ENCODE measurements at regions of chr6 and their contacts with region 1.

Region 1: DNA sequence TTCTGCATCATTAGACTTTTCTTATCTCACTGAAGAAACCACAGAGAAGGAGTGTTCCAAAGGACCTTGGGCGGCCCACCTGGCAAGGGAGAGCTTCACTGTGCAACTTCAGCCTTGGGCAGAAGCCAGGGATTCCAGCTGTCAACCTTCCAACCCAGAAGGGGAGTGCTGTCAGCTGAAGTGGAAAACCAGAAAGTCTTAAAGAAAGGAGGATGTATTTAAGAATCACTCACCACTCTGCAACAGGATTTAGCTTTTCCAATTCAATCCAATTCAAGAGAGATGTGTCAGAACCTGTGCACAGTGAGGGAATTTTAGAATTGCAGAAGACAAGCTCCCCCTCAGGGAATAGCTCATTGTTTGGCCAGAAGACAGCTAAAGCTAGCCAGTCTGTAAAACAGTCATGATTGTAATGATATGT is 553.7 kb downstream of the CD83 start:
- DNase-seq: no peak
- H3K4me3 ChIP-seq: no peak overlapping the region
- H3K27ac ChIP-seq: no peak overlapping the region
- H3K4me1 ChIP-seq: peaks cover 0 to 4% (median 0%) of the 10 kb centered on the region in 4 experiments
- H3K27me3 ChIP-seq: peaks cover 0 to 4% (median 0%) of the 10 kb centered on the region in 5 experiments

Region 2: GRCh38 chr6:14660806-14661579 is 10.3 kb before region 1 on chr6:
- CTCF ChIA-PET with region 1: interaction called, 11 read pairs
- POLR2A ChIA-PET with region 1: no interaction called
- DNase-seq: peak; percentile 67 to 94 (median 92)
- H3K4me3 ChIP-seq: no peak overlapping the region
- H3K27ac ChIP-seq: peak overlapping the region; percentile 4 to 37
- H3K4me1 ChIP-seq: peaks cover 40 to 61% (median 59%) of the 10 kb centered on the region in 4 experiments
- H3K27me3 ChIP-seq: no peaks in the 10 kb centered on the region